ENCODE measurements at regions of chr19 and their contacts with region 1.

Region 1: GRCh38 chr19:52962394-52963246 is at the start of gene ZNF816:
- DNase-seq: peak; percentile 94 to 99 (median 98)
- ATAC-seq: peak; percentile 100
- H3K4me3 ChIP-seq: peak within 1 kb of the TSS; percentile 77
- H3K4me3 Mint-ChIP-seq: peak within 1 kb of the TSS; percentile 87 to 96 (median 94)
- H3K27ac ChIP-seq: peak within 1 kb of the TSS; percentile 73
- H3K27ac Mint-ChIP-seq: peak within 1 kb of the TSS; percentile 82 to 95 (median 93)
- H3K4me1 ChIP-seq: peaks cover 12 to 14% of the 10 kb centered on the region in 2 donors
- H3K4me1 Mint-ChIP-seq: peaks cover 15 to 33% (median 29%) of the 10 kb centered on the region in 7 donors
- H3K27me3 ChIP-seq: no peaks in the 10 kb centered on the region
- H3K27me3 Mint-ChIP-seq: no peaks in the 10 kb centered on the region
- total RNA-seq, gene ZNF816: 5.0 to 25.7 (median 11.0) TPM

Region 2: DNA sequence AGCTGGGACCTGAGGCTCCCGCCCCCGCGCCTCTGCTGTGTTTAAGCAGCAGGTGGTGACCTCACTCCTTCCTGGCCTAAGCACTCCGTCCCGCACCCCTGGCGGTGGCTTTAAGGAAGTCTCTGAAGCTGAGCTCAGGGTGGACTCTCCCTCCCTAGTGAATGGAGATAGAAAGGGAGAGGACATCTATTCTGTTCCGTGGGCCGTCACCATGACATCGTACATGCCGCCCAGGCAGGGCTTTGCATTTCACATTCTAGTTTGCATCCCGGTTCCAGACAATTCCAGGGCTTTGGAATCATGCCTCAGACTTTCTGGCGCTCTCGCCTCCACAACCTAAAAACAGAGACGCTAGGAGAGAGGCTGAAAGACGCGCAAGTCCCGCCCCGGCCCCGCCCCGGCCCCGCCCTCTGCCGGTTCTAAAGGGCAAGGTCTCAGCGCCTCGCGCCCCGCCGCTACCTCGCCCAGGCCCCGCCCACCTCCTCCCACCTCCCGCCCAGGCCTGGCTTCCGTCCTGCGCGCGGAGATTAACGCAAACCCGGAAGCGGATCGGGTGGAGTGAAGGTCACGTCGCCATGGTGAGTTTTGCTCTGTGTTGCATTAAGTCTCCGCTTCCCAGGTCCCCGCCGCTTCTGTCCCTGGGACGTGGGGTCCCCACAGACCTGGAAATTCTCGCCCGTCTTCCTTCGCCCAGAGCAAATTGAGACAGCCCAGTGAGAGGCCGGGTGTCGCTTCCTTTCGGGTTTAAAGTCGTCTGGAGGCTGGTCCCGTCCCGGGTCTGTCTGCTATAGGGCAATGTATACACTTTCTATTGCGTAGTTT is 435.3 kb before region 1 on chr19 and contains the start of gene ZNF808:
- CTCF ChIA-PET with region 1: no interaction called
- POLR2A ChIA-PET with region 1: no interaction called
- intact Hi-C with region 1: loop called in 1 of 2 experiments (anchors 2 kb)
- DNase-seq: peak; percentile 79 to 95 (median 90)
- ATAC-seq: peak; percentile 99
- H3K4me3 ChIP-seq: peak within 1 kb of the TSS; percentile 99
- H3K4me3 Mint-ChIP-seq: peak within 1 kb of the TSS; percentile 91 to 100 (median 98)
- H3K27ac ChIP-seq: peak within 1 kb of the TSS; percentile 91
- H3K27ac Mint-ChIP-seq: peak within 1 kb of the TSS; percentile 84 to 99 (median 98)
- H3K4me1 ChIP-seq: peaks cover 9 to 12% of the 10 kb centered on the region in 2 donors
- H3K4me1 Mint-ChIP-seq: peaks cover 18 to 34% (median 25%) of the 10 kb centered on the region in 7 donors
- H3K27me3 ChIP-seq: no peaks in the 10 kb centered on the region
- H3K27me3 Mint-ChIP-seq: no peaks in the 10 kb centered on the region
- total RNA-seq, gene ZNF808: 17.7 to 52.4 (median 33.7) TPM

Region 3: GRCh38 chr19:52786457-52787359 is 175.9 kb before region 1 on chr19 and contains the start of gene ZNF600:
- CTCF ChIA-PET with region 1: no interaction called
- POLR2A ChIA-PET with region 1: no interaction called
- intact Hi-C with region 1: loop called in 1 of 2 experiments (anchors 10 kb)
- DNase-seq: peak; percentile 33 to 65 (median 45)
- ATAC-seq: peak; percentile 98
- H3K4me3 ChIP-seq: peak within 1 kb of the TSS; percentile 60
- H3K4me3 Mint-ChIP-seq: peak within 1 kb of the TSS; percentile 83 to 96 (median 92)
- H3K27ac ChIP-seq: peak within 1 kb of the TSS; percentile 70
- H3K27ac Mint-ChIP-seq: peak within 1 kb of the TSS; percentile 28 to 97 (median 81)
- H3K4me1 ChIP-seq: peaks cover 0 to 3% of the 10 kb centered on the region in 2 donors
- H3K4me1 Mint-ChIP-seq: peaks cover 19 to 35% (median 32%) of the 10 kb centered on the region in 7 donors
- H3K27me3 ChIP-seq: no peaks in the 10 kb centered on the region
- H3K27me3 Mint-ChIP-seq: no peaks in the 10 kb centered on the region
- total RNA-seq, gene ZNF600: 6.7 to 30.0 (median 19.8) TPM

Region 4: DNA sequence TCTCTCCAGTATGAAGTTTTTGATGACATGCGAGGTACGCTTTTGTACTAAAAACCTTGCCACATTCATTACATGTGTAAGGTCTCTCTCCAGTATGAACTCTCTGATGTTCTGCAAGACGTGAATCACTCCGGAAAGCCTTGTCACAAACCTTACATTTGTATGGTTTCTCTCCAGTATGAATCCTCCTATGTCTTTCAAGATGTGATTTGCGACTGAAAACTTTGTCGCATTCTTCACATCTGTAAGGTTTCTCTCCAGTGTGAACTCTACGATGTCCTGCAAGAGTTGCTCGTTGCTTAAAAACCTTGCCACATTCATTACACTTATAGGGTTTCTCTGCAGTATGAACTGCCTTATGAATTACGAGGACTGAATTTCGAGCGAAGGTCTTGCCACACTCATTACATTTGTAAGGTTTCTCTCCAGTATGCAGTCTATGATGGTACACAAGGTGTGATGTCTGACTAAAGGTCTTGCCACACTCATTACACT is 81.7 kb before region 1 on chr19:
- CTCF ChIA-PET with region 1: no interaction called
- POLR2A ChIA-PET with region 1: no interaction called
- intact Hi-C with region 1: no loop called
- DNase-seq: no peak
- ATAC-seq: no peak
- H3K4me3 ChIP-seq: no peak overlapping the region
- H3K4me3 Mint-ChIP-seq: no peak overlapping the region
- H3K27ac ChIP-seq: no peak overlapping the region
- H3K27ac Mint-ChIP-seq: no peak overlapping the region
- H3K4me1 ChIP-seq: no peaks in the 10 kb centered on the region
- H3K4me1 Mint-ChIP-seq: no peaks in the 10 kb centered on the region
- H3K27me3 ChIP-seq: no peaks in the 10 kb centered on the region
- H3K27me3 Mint-ChIP-seq: no peaks in the 10 kb centered on the region

Region 5: GRCh38 chr19:52922841-52923777 is 39.5 kb before region 1 on chr19 and contains the start of gene ZNF888:
- CTCF ChIA-PET with region 1: no interaction called
- POLR2A ChIA-PET with region 1: interaction called, 3 read pairs
- intact Hi-C with region 1: loop called (anchors 2 kb)
- DNase-seq: peak; percentile 52 to 89 (median 78)
- ATAC-seq: peak; percentile 100
- H3K4me3 ChIP-seq: peak within 1 kb of the TSS; percentile 87
- H3K4me3 Mint-ChIP-seq: peak within 1 kb of the TSS; percentile 80 to 94 (median 92)
- H3K27ac ChIP-seq: peak within 1 kb of the TSS; percentile 77
- H3K27ac Mint-ChIP-seq: peak within 1 kb of the TSS; percentile 23 to 93 (median 91)
- H3K4me1 ChIP-seq: no peaks in the 10 kb centered on the region
- H3K4me1 Mint-ChIP-seq: peaks cover 11 to 37% (median 24%) of the 10 kb centered on the region in 7 donors
- H3K27me3 ChIP-seq: no peaks in the 10 kb centered on the region
- H3K27me3 Mint-ChIP-seq: peaks cover 0 to 11% (median 6%) of the 10 kb centered on the region in 5 donors
- total RNA-seq, gene ZNF888: 2.1 to 7.2 (median 6.0) TPM

Region 6: DNA sequence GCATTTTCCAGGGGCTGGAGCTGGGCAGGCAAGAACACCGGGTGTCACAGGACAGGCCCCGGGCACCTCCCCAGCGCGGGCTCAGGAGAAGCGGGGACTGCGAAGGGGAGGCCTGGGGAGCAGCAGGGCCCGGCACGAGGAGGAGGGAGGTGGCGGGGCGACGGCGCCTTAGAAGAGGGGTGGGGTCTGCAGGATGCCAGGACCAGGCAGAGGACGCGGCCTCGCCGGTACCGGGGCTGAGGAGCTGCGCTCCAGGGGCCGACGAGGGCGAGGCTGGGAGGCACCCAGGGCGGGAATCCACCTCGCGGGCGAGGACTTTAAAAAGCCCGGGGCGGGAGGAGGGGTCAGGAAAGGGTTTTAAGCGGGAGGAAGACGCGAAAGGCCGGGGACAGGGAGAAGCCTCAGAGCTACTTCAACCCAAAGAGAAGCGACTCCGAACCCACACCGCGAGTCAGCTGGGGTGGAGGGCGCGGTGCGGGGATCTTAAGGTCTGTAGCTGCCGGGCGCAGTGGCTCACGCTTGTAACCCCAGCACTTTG is 195.6 kb after region 1 on chr19:
- CTCF ChIA-PET with region 1: no interaction called
- POLR2A ChIA-PET with region 1: interaction called, 4 read pairs
- intact Hi-C with region 1: loop called in 1 of 2 experiments (anchors 1 kb)
- DNase-seq: peak in 5 of 9 donors; percentile 9 to 41 (median 26)
- ATAC-seq: peak; percentile 35
- H3K4me3 ChIP-seq: peak overlapping the region; percentile 97
- H3K4me3 Mint-ChIP-seq: peak overlapping the region; percentile 65 to 91 (median 86)
- H3K27ac ChIP-seq: peak overlapping the region; percentile 70
- H3K27ac Mint-ChIP-seq: peak overlapping the region; percentile 44 to 90 (median 85)
- H3K4me1 ChIP-seq: peaks cover 4 to 7% of the 10 kb centered on the region in 2 donors
- H3K4me1 Mint-ChIP-seq: peaks cover 12 to 32% (median 27%) of the 10 kb centered on the region in 7 donors
- H3K27me3 ChIP-seq: no peaks in the 10 kb centered on the region
- H3K27me3 Mint-ChIP-seq: no peaks in the 10 kb centered on the region

Region 7: GRCh38 chr19:53394974-53395839 is 432.6 kb after region 1 on chr19 and contains the start of gene ZNF765:
- CTCF ChIA-PET with region 1: no interaction called
- POLR2A ChIA-PET with region 1: interaction called, 3 read pairs
- intact Hi-C with region 1: loop called (anchors 1 to 2 kb)
- DNase-seq: peak; percentile 92 to 99 (median 97)
- ATAC-seq: peak; percentile 100
- H3K4me3 ChIP-seq: peak within 1 kb of the TSS; percentile 97
- H3K4me3 Mint-ChIP-seq: peak within 1 kb of the TSS; percentile 88 to 97 (median 93)
- H3K27ac ChIP-seq: peak within 1 kb of the TSS; percentile 82
- H3K27ac Mint-ChIP-seq: peak within 1 kb of the TSS; percentile 89 to 97 (median 94)
- H3K4me1 ChIP-seq: peaks cover 5 to 8% of the 10 kb centered on the region in 2 donors
- H3K4me1 Mint-ChIP-seq: peaks cover 13 to 40% (median 31%) of the 10 kb centered on the region in 7 donors
- H3K27me3 ChIP-seq: no peaks in the 10 kb centered on the region
- H3K27me3 Mint-ChIP-seq: no peaks in the 10 kb centered on the region
- total RNA-seq, gene ZNF765: 5.1 to 19.5 (median 11.4) TPM